ENCODE measurements at regions of chr14 and their contacts with region 1.

Region 1: GRCh38 chr14:93970549-93970946 is 5.8 kb downstream of the ASB2 start:
- DNase-seq: peak; percentile 46 to 85 (median 77)
- ATAC-seq: peak; percentile 93
- H3K4me3 ChIP-seq: peak overlapping the region; percentile 63 to 64
- H3K4me3 Mint-ChIP-seq: peak overlapping the region; percentile 92
- H3K27ac ChIP-seq: no peak overlapping the region
- H3K27ac Mint-ChIP-seq: peak overlapping the region; percentile 87
- H3K4me1 ChIP-seq: peaks cover 7% of the 10 kb centered on the region
- H3K4me1 Mint-ChIP-seq: peaks cover 32% of the 10 kb centered on the region
- H3K27me3 ChIP-seq: no peaks in the 10 kb centered on the region
- H3K27me3 Mint-ChIP-seq: peaks cover 2% of the 10 kb centered on the region
- CTCF ChIP-seq: peak; percentile 77

Region 2: GRCh38 chr14:93953263-93953662 is 17.3 kb before region 1 on chr14:
- CTCF ChIA-PET with region 1: interaction called, 37 read pairs
- POLR2A ChIA-PET with region 1: interaction called, 19 read pairs
- intact Hi-C with region 1: loop called (anchors 2 kb)
- DNase-seq: peak in 2 of 9 experiments; percentile 26 to 33
- ATAC-seq: no peak
- H3K4me3 ChIP-seq: no peak overlapping the region
- H3K4me3 Mint-ChIP-seq: peak overlapping the region; percentile 78
- H3K27ac ChIP-seq: no peak overlapping the region
- H3K27ac Mint-ChIP-seq: peak overlapping the region; percentile 76
- H3K4me1 ChIP-seq: peaks cover 49% of the 10 kb centered on the region
- H3K4me1 Mint-ChIP-seq: peaks cover 53% of the 10 kb centered on the region
- H3K27me3 ChIP-seq: no peaks in the 10 kb centered on the region
- H3K27me3 Mint-ChIP-seq: no peaks in the 10 kb centered on the region
- CTCF ChIP-seq: no peak

Region 3: GRCh38 chr14:93959239-93960107 is 11.1 kb before region 1 on chr14:
- CTCF ChIA-PET with region 1: interaction called, 37 read pairs
- POLR2A ChIA-PET with region 1: interaction called, 19 read pairs
- intact Hi-C with region 1: loop called (anchors 1 to 2 kb)
- DNase-seq: peak; percentile 78 to 97 (median 91)
- ATAC-seq: peak; percentile 73
- H3K4me3 ChIP-seq: peak overlapping the region in 1 of 2 experiments; percentile 5
- H3K4me3 Mint-ChIP-seq: peak overlapping the region; percentile 53
- H3K27ac ChIP-seq: peak overlapping the region; percentile 47 to 89
- H3K27ac Mint-ChIP-seq: peak overlapping the region; percentile 97
- H3K4me1 ChIP-seq: peaks cover 97% of the 10 kb centered on the region
- H3K4me1 Mint-ChIP-seq: peaks cover 92% of the 10 kb centered on the region
- H3K27me3 ChIP-seq: no peaks in the 10 kb centered on the region
- H3K27me3 Mint-ChIP-seq: no peaks in the 10 kb centered on the region
- CTCF ChIP-seq: no peak

Region 4: GRCh38 chr14:93984987-93985410 is 14.5 kb after region 1 on chr14:
- CTCF ChIA-PET with region 1: interaction called, 41 read pairs
- POLR2A ChIA-PET with region 1: no interaction called
- intact Hi-C with region 1: no loop called
- DNase-seq: no peak
- ATAC-seq: no peak
- H3K4me3 ChIP-seq: no peak overlapping the region
- H3K4me3 Mint-ChIP-seq: no peak overlapping the region
- H3K27ac ChIP-seq: no peak overlapping the region
- H3K27ac Mint-ChIP-seq: no peak overlapping the region
- H3K4me1 ChIP-seq: peaks cover 8% of the 10 kb centered on the region
- H3K4me1 Mint-ChIP-seq: peaks cover 5% of the 10 kb centered on the region
- H3K27me3 ChIP-seq: no peaks in the 10 kb centered on the region
- H3K27me3 Mint-ChIP-seq: peaks cover 7% of the 10 kb centered on the region
- CTCF ChIP-seq: no peak

Region 5: DNA sequence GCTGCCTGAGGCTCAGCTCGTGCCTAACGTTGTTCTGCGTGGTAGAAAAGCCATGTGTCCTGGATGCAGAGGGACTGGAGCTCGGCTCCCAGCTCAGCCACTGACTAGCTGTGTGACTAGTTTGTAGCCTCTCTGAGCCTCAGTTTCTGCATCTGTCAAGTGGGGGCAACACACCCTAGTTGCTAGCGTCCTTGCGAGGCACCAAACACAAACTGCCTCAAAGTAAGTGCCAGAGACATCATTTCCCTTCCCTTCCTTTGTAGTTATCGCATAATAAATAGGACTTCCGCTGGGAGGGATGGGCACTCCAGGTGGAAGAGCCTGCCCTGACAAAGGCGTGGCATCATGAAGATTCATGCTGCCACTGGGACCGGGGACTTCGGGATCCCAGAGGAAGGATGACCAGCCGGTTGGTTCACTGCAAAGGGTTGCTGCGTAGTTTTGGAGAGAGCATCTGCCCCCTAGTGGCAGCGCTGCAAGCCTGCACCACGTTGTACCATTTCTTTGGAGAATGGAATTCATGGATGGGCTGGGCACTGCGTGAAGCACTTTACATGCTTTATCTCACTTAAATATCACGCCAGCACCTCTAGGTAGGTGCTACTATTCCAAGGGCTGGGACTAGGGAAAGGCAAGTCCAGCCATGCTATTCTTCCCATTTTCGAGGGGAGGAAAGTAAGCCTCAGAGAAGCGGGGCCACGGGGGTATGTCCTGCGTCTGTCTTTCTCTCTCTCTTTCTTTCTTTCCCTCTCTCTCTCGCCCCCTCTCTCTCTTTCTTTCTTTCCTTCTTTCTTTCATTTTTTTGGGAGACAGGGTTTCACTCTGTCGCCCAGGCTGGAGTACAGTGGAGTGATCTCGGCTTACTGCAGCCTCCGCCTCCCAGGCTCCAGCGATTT is 31.2 kb after region 1 on chr14:
- CTCF ChIA-PET with region 1: interaction called, 28 read pairs
- POLR2A ChIA-PET with region 1: interaction called, 4 read pairs
- intact Hi-C with region 1: loop called (anchors 1 kb)
- DNase-seq: peak; percentile 18 to 79 (median 62)
- ATAC-seq: peak; percentile 85
- H3K4me3 ChIP-seq: no peak overlapping the region
- H3K4me3 Mint-ChIP-seq: no peak overlapping the region
- H3K27ac ChIP-seq: no peak overlapping the region
- H3K27ac Mint-ChIP-seq: no peak overlapping the region
- H3K4me1 ChIP-seq: peaks cover 6% of the 10 kb centered on the region
- H3K4me1 Mint-ChIP-seq: peaks cover 7% of the 10 kb centered on the region
- H3K27me3 ChIP-seq: peaks cover 0 to 7% of the 10 kb centered on the region in 2 experiments
- H3K27me3 Mint-ChIP-seq: peaks cover 16% of the 10 kb centered on the region
- CTCF ChIP-seq: peak; percentile 95

Region 6: DNA sequence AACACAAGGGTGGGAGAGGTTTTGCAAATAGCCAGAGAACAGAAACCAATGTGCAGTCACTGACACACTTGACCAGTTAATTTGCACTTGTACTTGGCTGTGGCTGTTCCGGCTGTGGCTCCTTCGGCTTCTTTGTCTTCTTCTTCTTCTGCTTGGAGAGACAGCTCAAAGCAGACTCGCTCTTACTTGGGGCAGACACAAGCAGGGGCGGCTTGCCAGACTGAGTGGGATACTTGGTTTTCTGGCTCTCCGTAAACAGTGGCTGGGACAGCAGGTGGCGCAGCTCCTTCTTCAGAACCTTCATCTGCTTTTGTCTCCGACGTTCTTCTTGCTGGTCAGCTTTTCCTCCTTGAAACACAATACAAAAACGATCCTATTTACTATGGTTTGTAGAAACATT is 80.6 kb after region 1 on chr14:
- CTCF ChIA-PET with region 1: no interaction called
- POLR2A ChIA-PET with region 1: no interaction called
- intact Hi-C with region 1: no loop called
- DNase-seq: peak in 2 of 9 experiments; percentile 5 to 6
- ATAC-seq: no peak
- H3K4me3 ChIP-seq: no peak overlapping the region
- H3K4me3 Mint-ChIP-seq: no peak overlapping the region
- H3K27ac ChIP-seq: no peak overlapping the region
- H3K27ac Mint-ChIP-seq: no peak overlapping the region
- H3K4me1 ChIP-seq: no peaks in the 10 kb centered on the region
- H3K4me1 Mint-ChIP-seq: peaks cover 15% of the 10 kb centered on the region
- H3K27me3 ChIP-seq: no peaks in the 10 kb centered on the region
- H3K27me3 Mint-ChIP-seq: no peaks in the 10 kb centered on the region
- CTCF ChIP-seq: no peak